Mammary epithelial cell (primary cell): ENCODE measurements at regions of chr1 and their contacts with region 1.

Region 1: GRCh38 chr1:147599362-147600118 is 58.2 kb downstream of the BCL9 start:
- DNase-seq: peak; percentile 91
- H3K4me3 ChIP-seq: peak overlapping the region; percentile 72 to 91 (median 82)
- H3K27ac ChIP-seq: peak overlapping the region; percentile 25
- H3K4me1 ChIP-seq: peaks cover 16% of the 10 kb centered on the region
- H3K27me3 ChIP-seq: peaks cover 5% of the 10 kb centered on the region
- CTCF ChIP-seq: no peak

Region 2: GRCh38 chr1:147539112-147539575 is 60.4 kb before region 1 on chr1:
- CTCF ChIA-PET with region 1: no interaction called
- dilution Hi-C with region 1: no loop called
- in situ Hi-C with region 1: loop called in 1 of 2 experiments (anchors 10 kb)
- intact Hi-C with region 1: loop called (anchors 1 kb)
- DNase-seq: peak; percentile 81
- H3K4me3 ChIP-seq: no peak overlapping the region
- H3K27ac ChIP-seq: no peak overlapping the region
- H3K4me1 ChIP-seq: peaks cover 12% of the 10 kb centered on the region
- H3K27me3 ChIP-seq: peaks cover 20% of the 10 kb centered on the region
- CTCF ChIP-seq: no peak

Region 3: DNA sequence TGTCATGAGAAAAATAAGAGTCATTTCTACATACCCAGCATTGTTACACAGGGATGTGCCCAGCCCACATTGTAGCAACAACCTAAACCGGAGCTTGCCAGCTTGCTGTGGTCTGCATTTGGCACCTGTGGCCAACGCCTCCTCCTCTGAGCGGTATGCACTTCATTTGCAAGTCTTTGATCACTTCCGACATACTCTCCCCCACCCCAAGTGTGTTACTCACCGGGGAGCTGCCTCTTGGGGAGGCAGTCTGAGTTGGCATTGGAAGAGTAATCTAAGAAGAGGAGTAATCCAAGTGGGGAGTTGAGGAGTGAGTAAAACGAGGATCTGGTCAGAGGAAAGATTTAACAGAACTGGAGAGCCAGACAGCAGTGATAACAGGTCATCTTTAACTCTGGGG is 54.4 kb before region 1 on chr1:
- CTCF ChIA-PET with region 1: no interaction called
- dilution Hi-C with region 1: no loop called
- in situ Hi-C with region 1: loop called in 1 of 2 experiments (anchors 10 kb)
- intact Hi-C with region 1: loop called (anchors 1 kb)
- DNase-seq: peak; percentile 97
- H3K4me3 ChIP-seq: no peak overlapping the region
- H3K27ac ChIP-seq: no peak overlapping the region
- H3K4me1 ChIP-seq: peaks cover 12% of the 10 kb centered on the region
- H3K27me3 ChIP-seq: peaks cover 39% of the 10 kb centered on the region
- CTCF ChIP-seq: no peak

Region 4: GRCh38 chr1:147683163-147683763 is 83.7 kb after region 1 on chr1:
- CTCF ChIA-PET with region 1: no interaction called
- dilution Hi-C with region 1: no loop called
- in situ Hi-C with region 1: no loop called
- intact Hi-C with region 1: no loop called
- DNase-seq: no peak
- H3K4me3 ChIP-seq: no peak overlapping the region
- H3K27ac ChIP-seq: no peak overlapping the region
- H3K4me1 ChIP-seq: no peaks in the 10 kb centered on the region
- H3K27me3 ChIP-seq: peaks cover 1% of the 10 kb centered on the region
- CTCF ChIP-seq: no peak

Region 5: GRCh38 chr1:147748676-147749350 is 149.3 kb after region 1 on chr1:
- CTCF ChIA-PET with region 1: no interaction called
- dilution Hi-C with region 1: no loop called
- in situ Hi-C with region 1: no loop called
- intact Hi-C with region 1: no loop called
- DNase-seq: peak; percentile 45
- H3K4me3 ChIP-seq: no peak overlapping the region
- H3K27ac ChIP-seq: no peak overlapping the region
- H3K4me1 ChIP-seq: peaks cover 36% of the 10 kb centered on the region
- H3K27me3 ChIP-seq: no peaks in the 10 kb centered on the region
- CTCF ChIP-seq: no peak